Activated T-helper 2 cell treated with anti-CD3 and anti-CD28 coated beads, Interferon-gamma antibody, Interleukin-2, Interleukin-4, amounts not matched to agents 10 μg/mL and 5 μg/mL and 100 μg/mL, durations not matched to agents 14 hours and 24 hours and 36 hours (primary cell): ENCODE measurements at regions of chr20 and their contacts with region 1.

Region 1: GRCh38 chr20:3786665-3787323 is at the start of gene CENPB:
- DNase-seq: peak; percentile 88
- H3K4me3 Mint-ChIP-seq: peak within 1 kb of the TSS; percentile 83
- H3K27ac Mint-ChIP-seq: peak within 1 kb of the TSS; percentile 8
- H3K4me1 Mint-ChIP-seq: peaks cover 32% of the 10 kb centered on the region
- H3K27me3 Mint-ChIP-seq: no peaks in the 10 kb centered on the region
- total RNA-seq, gene CENPB: 66.1 and 68.9 TPM in 2 replicates

Region 2: GRCh38 chr20:3811467-3812258 is 24.9 kb after region 1 on chr20:
- intact Hi-C with region 1: loop called (anchors 2 kb)
- DNase-seq: peak; percentile 81
- H3K4me3 Mint-ChIP-seq: peak overlapping the region; percentile 74
- H3K27ac Mint-ChIP-seq: peak overlapping the region; percentile 99
- H3K4me1 Mint-ChIP-seq: peaks cover 58% of the 10 kb centered on the region
- H3K27me3 Mint-ChIP-seq: no peaks in the 10 kb centered on the region

Region 3: GRCh38 chr20:3846740-3847428 is 60.1 kb after region 1 on chr20 and contains the start of gene MAVS:
- intact Hi-C with region 1: loop called (anchors 2 kb)
- DNase-seq: peak; percentile 83
- H3K4me3 Mint-ChIP-seq: peak within 1 kb of the TSS; percentile 90
- H3K27ac Mint-ChIP-seq: peak within 1 kb of the TSS; percentile 79
- H3K4me1 Mint-ChIP-seq: peaks cover 17% of the 10 kb centered on the region
- H3K27me3 Mint-ChIP-seq: no peaks in the 10 kb centered on the region
- total RNA-seq, gene MAVS: 41.0 and 43.5 TPM in 2 replicates

Region 4: GRCh38 chr20:3854462-3854871 is 67.7 kb after region 1 on chr20:
- intact Hi-C with region 1: loop called (anchors 2 kb)
- DNase-seq: no peak
- H3K4me3 Mint-ChIP-seq: no peak overlapping the region
- H3K27ac Mint-ChIP-seq: no peak overlapping the region
- H3K4me1 Mint-ChIP-seq: peaks cover 5% of the 10 kb centered on the region
- H3K27me3 Mint-ChIP-seq: no peaks in the 10 kb centered on the region